Sciatic nerve (tissue), 2 donors: ENCODE measurements at regions of chr6 and their contacts with region 1.

Region 1: GRCh38 chr6:35445696-35446095 is 6.4 kb upstream of the FANCE start:
- DNase-seq: no peak
- ATAC-seq: no peak

Region 2: GRCh38 chr6:35342258-35343091 is 103.2 kb before region 1 on chr6 and contains the start of gene PPARD:
- intact Hi-C with region 1: loop called (anchors 2 kb)
- DNase-seq: peak; percentile 99
- ATAC-seq: peak; percentile 99
- total RNA-seq, gene PPARD: 26.7 TPM

Region 3: GRCh38 chr6:35522660-35523658 is 77.3 kb after region 1 on chr6:
- intact Hi-C with region 1: no loop called
- DNase-seq: peak; percentile 85
- ATAC-seq: peak; percentile 94